MCF 10A (cell line): ENCODE measurements at regions of chr2 and their contacts with region 1.

Region 1: GRCh38 chr2:126971481-126972278 is 73.0 kb downstream of the TEX51 start:
- DNase-seq: peak; percentile 65
- H3K4me3 Mint-ChIP-seq: peak overlapping the region; percentile 64
- H3K27ac Mint-ChIP-seq: no peak overlapping the region
- H3K4me1 Mint-ChIP-seq: peaks cover 6% of the 10 kb centered on the region
- H3K27me3 Mint-ChIP-seq: peaks cover 45% of the 10 kb centered on the region
- CTCF ChIP-seq: peak; percentile 95

Region 2: GRCh38 chr2:126244937-126245336 is 726.7 kb before region 1 on chr2:
- CTCF ChIA-PET with region 1: interaction called, 8 read pairs
- POLR2A ChIA-PET with region 1: no interaction called
- intact Hi-C with region 1: loop called (anchors 5 kb)
- DNase-seq: peak; percentile 63
- H3K4me3 Mint-ChIP-seq: no peak overlapping the region
- H3K27ac Mint-ChIP-seq: no peak overlapping the region
- H3K4me1 Mint-ChIP-seq: no peaks in the 10 kb centered on the region
- H3K27me3 Mint-ChIP-seq: peaks cover 10% of the 10 kb centered on the region
- CTCF ChIP-seq: peak; percentile 39

Region 3: GRCh38 chr2:126527836-126528507 is 443.7 kb before region 1 on chr2:
- CTCF ChIA-PET with region 1: interaction called, 7 read pairs
- POLR2A ChIA-PET with region 1: no interaction called
- intact Hi-C with region 1: loop called (anchors 1 kb)
- DNase-seq: peak; percentile 57
- H3K4me3 Mint-ChIP-seq: no peak overlapping the region
- H3K27ac Mint-ChIP-seq: no peak overlapping the region
- H3K4me1 Mint-ChIP-seq: no peaks in the 10 kb centered on the region
- H3K27me3 Mint-ChIP-seq: no peaks in the 10 kb centered on the region
- CTCF ChIP-seq: peak; percentile 12

Region 4: GRCh38 chr2:126776692-126777619 is 194.7 kb before region 1 on chr2:
- CTCF ChIA-PET with region 1: interaction called, 5 read pairs
- POLR2A ChIA-PET with region 1: no interaction called
- intact Hi-C with region 1: loop called (anchors 10 kb)
- DNase-seq: peak; percentile 55
- H3K4me3 Mint-ChIP-seq: peak overlapping the region; percentile 71
- H3K27ac Mint-ChIP-seq: no peak overlapping the region
- H3K4me1 Mint-ChIP-seq: peaks cover 6% of the 10 kb centered on the region
- H3K27me3 Mint-ChIP-seq: peaks cover 57% of the 10 kb centered on the region
- CTCF ChIP-seq: peak; percentile 78

Region 5: DNA sequence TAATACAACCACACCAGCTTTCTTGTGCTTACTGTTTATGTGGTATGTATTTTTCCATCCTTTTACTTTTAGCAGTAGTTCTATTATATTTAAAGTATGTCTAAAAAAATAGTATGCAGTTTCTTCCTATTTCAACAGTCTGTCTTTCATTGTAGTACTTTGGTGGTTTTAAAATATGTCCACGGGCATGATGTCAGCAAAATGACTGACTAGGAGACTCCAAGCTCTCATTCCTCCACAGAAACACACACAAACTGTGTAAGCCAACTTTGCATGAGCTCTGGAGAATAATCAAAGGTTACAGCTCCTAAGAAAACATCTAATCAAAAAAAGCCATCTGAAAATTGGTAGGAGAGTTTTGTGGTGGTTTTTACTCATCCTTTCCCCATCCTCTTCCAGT is 16.8 kb before region 1 on chr2:
- CTCF ChIA-PET with region 1: interaction called, 13 read pairs
- POLR2A ChIA-PET with region 1: no interaction called
- intact Hi-C with region 1: no loop called
- DNase-seq: no peak
- H3K4me3 Mint-ChIP-seq: no peak overlapping the region
- H3K27ac Mint-ChIP-seq: no peak overlapping the region
- H3K4me1 Mint-ChIP-seq: no peaks in the 10 kb centered on the region
- H3K27me3 Mint-ChIP-seq: peaks cover 44% of the 10 kb centered on the region
- CTCF ChIP-seq: no peak

Region 6: DNA sequence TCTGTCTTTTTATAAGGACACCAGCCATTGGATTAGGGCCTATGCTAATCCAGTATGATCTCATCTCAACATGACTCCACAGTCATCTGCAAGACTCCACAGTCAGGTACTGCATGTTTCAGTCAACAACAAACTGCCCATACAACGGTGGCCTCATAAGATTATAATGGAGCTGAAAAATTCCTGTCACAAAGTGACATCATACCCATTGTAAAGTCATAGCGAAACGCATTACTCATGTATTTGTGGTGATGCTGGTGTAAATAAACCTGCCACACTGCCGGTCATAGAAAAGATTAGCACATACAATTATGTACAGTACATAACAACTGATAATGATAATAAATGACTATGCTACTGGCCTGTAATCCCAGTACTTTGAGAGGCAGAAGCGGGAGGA is 29.3 kb after region 1 on chr2:
- CTCF ChIA-PET with region 1: interaction called, 13 read pairs
- POLR2A ChIA-PET with region 1: no interaction called
- intact Hi-C with region 1: no loop called
- DNase-seq: no peak
- H3K4me3 Mint-ChIP-seq: no peak overlapping the region
- H3K27ac Mint-ChIP-seq: no peak overlapping the region
- H3K4me1 Mint-ChIP-seq: no peaks in the 10 kb centered on the region
- H3K27me3 Mint-ChIP-seq: no peaks in the 10 kb centered on the region
- CTCF ChIP-seq: no peak

Region 7: GRCh38 chr2:127049927-127050802 is 78.5 kb after region 1 on chr2:
- CTCF ChIA-PET with region 1: interaction called, 9 read pairs
- POLR2A ChIA-PET with region 1: no interaction called
- intact Hi-C with region 1: loop called (anchors 2 kb)
- DNase-seq: peak; percentile 53
- H3K4me3 Mint-ChIP-seq: no peak overlapping the region
- H3K27ac Mint-ChIP-seq: no peak overlapping the region
- H3K4me1 Mint-ChIP-seq: no peaks in the 10 kb centered on the region
- H3K27me3 Mint-ChIP-seq: no peaks in the 10 kb centered on the region
- CTCF ChIP-seq: peak; percentile 98